ENCODE measurements at regions of chr7 and their contacts with region 1.

Region 1: GRCh38 chr7:103962070-103962469 is 27.4 kb downstream of the RELN start:
- DNase-seq: no peak
- H3K4me3 ChIP-seq: no peak overlapping the region
- H3K4me3 Mint-ChIP-seq: no peak overlapping the region
- H3K27ac Mint-ChIP-seq: no peak overlapping the region
- H3K4me1 ChIP-seq: no peaks in the 10 kb centered on the region
- H3K4me1 Mint-ChIP-seq: peaks cover 7% of the 10 kb centered on the region
- H3K27me3 ChIP-seq: no peaks in the 10 kb centered on the region
- H3K27me3 Mint-ChIP-seq: no peaks in the 10 kb centered on the region
- CTCF ChIP-seq: no peak

Region 2: GRCh38 chr7:103748680-103749079 is 213.4 kb before region 1 on chr7:
- CTCF ChIA-PET with region 1: no interaction called
- POLR2A ChIA-PET with region 1: no interaction called
- intact Hi-C with region 1: no loop called
- DNase-seq: no peak
- H3K4me3 ChIP-seq: no peak overlapping the region
- H3K4me3 Mint-ChIP-seq: no peak overlapping the region
- H3K27ac Mint-ChIP-seq: no peak overlapping the region
- H3K4me1 ChIP-seq: no peaks in the 10 kb centered on the region
- H3K4me1 Mint-ChIP-seq: no peaks in the 10 kb centered on the region
- H3K27me3 ChIP-seq: no peaks in the 10 kb centered on the region
- H3K27me3 Mint-ChIP-seq: no peaks in the 10 kb centered on the region
- CTCF ChIP-seq: no peak

Region 3: DNA sequence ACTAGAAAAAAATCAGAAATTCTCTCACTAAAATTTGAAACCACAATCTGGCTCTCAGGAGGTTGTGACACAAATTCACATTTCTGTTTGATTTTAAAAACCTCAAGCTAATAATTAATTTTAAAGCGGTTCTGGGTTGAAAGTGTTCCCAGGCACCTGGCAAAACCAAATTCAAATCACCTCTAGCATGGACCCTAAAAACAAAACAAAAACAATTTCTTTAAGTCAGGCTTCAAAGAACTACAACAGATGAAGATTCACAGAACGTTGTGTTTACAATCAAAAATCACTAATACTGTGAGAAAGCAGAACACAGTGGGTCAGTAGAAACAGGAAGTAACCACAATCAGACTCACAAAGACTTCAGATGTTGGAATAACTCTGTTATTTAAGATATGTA is 34.6 kb after region 1 on chr7:
- CTCF ChIA-PET with region 1: no interaction called
- POLR2A ChIA-PET with region 1: no interaction called
- intact Hi-C with region 1: loop called (anchors 1 kb)
- DNase-seq: no peak
- H3K4me3 ChIP-seq: no peak overlapping the region
- H3K4me3 Mint-ChIP-seq: no peak overlapping the region
- H3K27ac Mint-ChIP-seq: no peak overlapping the region
- H3K4me1 ChIP-seq: no peaks in the 10 kb centered on the region
- H3K4me1 Mint-ChIP-seq: no peaks in the 10 kb centered on the region
- H3K27me3 ChIP-seq: no peaks in the 10 kb centered on the region
- H3K27me3 Mint-ChIP-seq: no peaks in the 10 kb centered on the region
- CTCF ChIP-seq: no peak